Dorsolateral prefrontal cortex (tissue), 120 donors: ENCODE measurements at regions of chr18 and their contacts with region 1.

Region 1: GRCh38 chr18:22408059-22408458 is 9.7 kb downstream of the CTAGE1 start:
- DNase-seq: no peak
- H3K4me3 ChIP-seq: no peak overlapping the region
- H3K27ac ChIP-seq: no peak overlapping the region
- H3K27me3 ChIP-seq: peaks cover 0 to 17% (median 0%) of the 10 kb centered on the region in 45 donors
- CTCF ChIP-seq: peak in 1 of 56 donors; percentile 9

Region 2: GRCh38 chr18:21584391-21584790 is 823.7 kb before region 1 on chr18:
- intact Hi-C with region 1: no loop called
- DNase-seq: no peak
- H3K4me3 ChIP-seq: no peak overlapping the region
- H3K27ac ChIP-seq: no peak overlapping the region
- H3K27me3 ChIP-seq: no peaks in the 10 kb centered on the region
- CTCF ChIP-seq: no peak

Region 3: GRCh38 chr18:22044474-22045220 is 363.4 kb before region 1 on chr18:
- intact Hi-C with region 1: no loop called
- DNase-seq: no peak
- H3K4me3 ChIP-seq: no peak overlapping the region
- H3K27ac ChIP-seq: no peak overlapping the region
- H3K27me3 ChIP-seq: peaks cover 0 to 10% (median 0%) of the 10 kb centered on the region in 45 donors
- CTCF ChIP-seq: no peak

Region 4: GRCh38 chr18:22210311-22210754 is 197.7 kb before region 1 on chr18:
- intact Hi-C with region 1: no loop called
- DNase-seq: no peak
- H3K4me3 ChIP-seq: no peak overlapping the region
- H3K27ac ChIP-seq: no peak overlapping the region
- H3K27me3 ChIP-seq: peaks cover 0 to 26% (median 4%) of the 10 kb centered on the region in 45 donors
- CTCF ChIP-seq: no peak

Region 5: DNA sequence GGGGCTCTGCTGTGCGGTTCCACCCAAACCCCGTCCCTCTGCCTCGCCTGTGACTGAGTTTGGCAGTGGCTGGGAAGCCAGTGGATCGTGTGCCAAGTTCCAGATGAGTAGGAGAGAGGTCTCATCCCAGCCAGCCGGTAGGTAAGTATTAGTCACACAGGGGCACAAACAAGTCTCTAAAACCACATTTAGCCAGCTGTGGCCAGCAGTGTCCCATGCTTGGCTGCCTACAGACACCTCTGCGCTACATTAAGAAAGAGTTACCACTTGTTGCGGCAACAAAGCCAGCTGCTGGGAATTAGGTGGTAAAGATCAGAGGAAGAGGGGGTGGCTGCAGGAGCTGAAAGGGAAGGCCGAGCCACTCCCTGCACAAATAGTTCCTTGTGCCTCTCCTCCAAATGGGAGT is 157.5 kb before region 1 on chr18:
- intact Hi-C with region 1: loop called in 1 of 2 experiments (anchors 10 kb)
- DNase-seq: no peak
- H3K4me3 ChIP-seq: no peak overlapping the region
- H3K27ac ChIP-seq: no peak overlapping the region
- H3K27me3 ChIP-seq: peaks cover 0 to 41% (median 0%) of the 10 kb centered on the region in 45 donors
- CTCF ChIP-seq: no peak